OCI-LY7 (cell line): ENCODE measurements at regions of chr15 and their contacts with region 1.

Region 1: GRCh38 chr15:89457097-89457496 is 39.3 kb downstream of the RHCG start:
- DNase-seq: peak; percentile 84
- H3K4me3 ChIP-seq: no peak overlapping the region
- H3K27ac ChIP-seq: no peak overlapping the region
- H3K4me1 ChIP-seq: peaks cover 4% of the 10 kb centered on the region
- CTCF ChIP-seq: no peak

Region 2: DNA sequence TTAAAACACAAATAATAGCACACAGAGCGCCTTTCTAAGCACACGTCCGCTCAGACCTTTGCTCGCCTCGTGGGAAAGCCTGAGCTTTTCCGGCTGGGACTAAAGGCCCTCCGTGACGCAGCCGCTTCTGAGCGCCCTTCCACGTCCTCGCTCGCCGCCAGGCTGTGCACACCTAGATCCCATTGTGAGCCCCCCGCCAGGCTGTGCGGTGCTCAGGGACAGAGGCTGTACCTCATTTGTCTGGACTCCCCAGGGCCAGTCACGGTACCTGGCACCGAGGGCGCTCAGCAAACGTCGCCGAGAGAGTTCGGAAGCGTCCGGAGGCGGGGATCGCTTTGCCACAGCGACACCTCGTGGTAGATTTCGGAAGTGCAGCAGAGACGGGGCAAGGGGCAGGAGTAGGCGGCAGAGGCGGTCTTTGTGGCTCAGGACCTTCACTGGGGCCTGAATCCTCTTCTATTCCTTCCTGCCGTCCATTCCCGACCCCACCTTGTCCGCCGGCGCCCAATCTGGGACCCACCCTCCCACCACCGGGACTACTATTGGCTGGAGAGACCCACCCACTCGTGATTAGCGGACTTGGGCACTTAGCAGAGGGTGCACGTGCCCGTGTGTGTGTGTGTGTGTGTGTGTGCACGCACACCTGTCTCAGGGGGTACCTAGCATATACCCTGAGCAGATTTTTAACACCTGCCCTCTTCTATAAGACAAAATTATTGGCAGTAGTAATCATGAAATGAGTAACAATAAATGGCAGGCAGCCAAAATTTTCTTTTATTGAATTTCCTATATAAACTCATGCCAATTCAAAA is 26.4 kb before region 1 on chr15:
- CTCF ChIA-PET with region 1: no interaction called
- POLR2A ChIA-PET with region 1: no interaction called
- intact Hi-C with region 1: no loop called
- DNase-seq: peak; percentile 81
- H3K4me3 ChIP-seq: peak overlapping the region; percentile 64
- H3K27ac ChIP-seq: no peak overlapping the region
- H3K4me1 ChIP-seq: peaks cover 11% of the 10 kb centered on the region
- CTCF ChIP-seq: peak; percentile 89

Region 3: GRCh38 chr15:89442671-89443307 is 14.3 kb before region 1 on chr15:
- CTCF ChIA-PET with region 1: no interaction called
- POLR2A ChIA-PET with region 1: interaction called, 5 read pairs
- intact Hi-C with region 1: loop called (anchors 1 kb)
- DNase-seq: peak; percentile 82
- H3K4me3 ChIP-seq: no peak overlapping the region
- H3K27ac ChIP-seq: peak overlapping the region; percentile 83
- H3K4me1 ChIP-seq: peaks cover 44% of the 10 kb centered on the region
- CTCF ChIP-seq: peak; percentile 93

Region 4: DNA sequence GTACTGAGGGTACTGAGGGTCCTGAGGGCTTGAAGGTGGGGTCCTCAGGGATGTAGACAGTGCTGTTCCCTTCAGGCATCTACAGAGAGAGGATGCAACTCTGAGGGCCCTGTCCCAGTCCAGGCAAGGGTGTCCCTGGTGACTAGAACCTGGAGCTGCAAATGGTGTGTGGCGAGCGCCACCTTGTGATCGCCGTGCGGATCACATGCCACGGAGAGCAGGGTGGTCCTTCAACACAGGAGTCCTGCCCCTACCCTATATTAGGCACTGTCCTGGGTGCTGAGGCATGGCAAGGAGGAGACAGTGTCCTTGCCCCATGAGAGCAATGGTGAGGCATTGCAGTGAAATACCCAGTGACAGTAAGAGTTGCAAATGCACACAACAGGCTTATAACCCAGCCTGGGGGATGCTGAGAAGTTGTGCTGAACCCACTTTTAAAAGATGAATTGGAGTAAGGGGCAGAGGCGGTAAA is 15.7 kb after region 1 on chr15:
- CTCF ChIA-PET with region 1: no interaction called
- POLR2A ChIA-PET with region 1: no interaction called
- intact Hi-C with region 1: no loop called
- DNase-seq: peak; percentile 70
- H3K4me3 ChIP-seq: no peak overlapping the region
- H3K27ac ChIP-seq: no peak overlapping the region
- H3K4me1 ChIP-seq: no peaks in the 10 kb centered on the region
- CTCF ChIP-seq: peak; percentile 94